ENCODE measurements at regions of chr2 and their contacts with region 1.

Region 1: GRCh38 chr2:68251187-68251854 is 1.0 kb downstream of the PPP3R1 start:
- DNase-seq: peak; percentile 66 to 89 (median 76)
- H3K4me3 ChIP-seq: peak overlapping the region; percentile 44 to 96 (median 86)
- H3K27ac ChIP-seq: peak overlapping the region; percentile 85 to 100 (median 96)
- H3K4me1 ChIP-seq: peaks cover 26 to 55% of the 10 kb centered on the region in 2 donors
- H3K27me3 ChIP-seq: no peaks in the 10 kb centered on the region
- CTCF ChIP-seq: peak; percentile 60 to 88 (median 76)
- POLR2A ChIP-seq: peak; percentile 20 to 65

Region 2: GRCh38 chr2:68044099-68044498 is 207.2 kb before region 1 on chr2:
- intact Hi-C with region 1: no loop called
- DNase-seq: no peak
- H3K4me3 ChIP-seq: no peak overlapping the region
- H3K27ac ChIP-seq: peak overlapping the region in 2 of 5 donors; percentile 9 to 18
- H3K4me1 ChIP-seq: peaks cover 6 to 22% of the 10 kb centered on the region in 2 donors
- H3K27me3 ChIP-seq: no peaks in the 10 kb centered on the region
- CTCF ChIP-seq: no peak
- POLR2A ChIP-seq: no peak

Region 3: GRCh38 chr2:68110102-68110501 is 141.2 kb before region 1 on chr2:
- intact Hi-C with region 1: no loop called
- DNase-seq: no peak
- H3K4me3 ChIP-seq: no peak overlapping the region
- H3K27ac ChIP-seq: no peak overlapping the region
- H3K4me1 ChIP-seq: no peaks in the 10 kb centered on the region
- H3K27me3 ChIP-seq: no peaks in the 10 kb centered on the region
- CTCF ChIP-seq: no peak
- POLR2A ChIP-seq: no peak

Region 4: GRCh38 chr2:68157402-68158133 is 93.8 kb before region 1 on chr2 and contains the start of gene PNO1:
- intact Hi-C with region 1: loop called in 1 of 2 experiments (anchors 5 kb)
- DNase-seq: peak; percentile 95 to 98 (median 97)
- H3K4me3 ChIP-seq: peak within 1 kb of the TSS; percentile 44 to 92 (median 54)
- H3K27ac ChIP-seq: peak within 1 kb of the TSS; percentile 72 to 99 (median 95)
- H3K4me1 ChIP-seq: peaks cover 10 to 23% of the 10 kb centered on the region in 2 donors
- H3K27me3 ChIP-seq: no peaks in the 10 kb centered on the region
- CTCF ChIP-seq: peak in 2 of 6 experiments; percentile 17 to 18
- POLR2A ChIP-seq: peak in 1 of 2 donors; percentile 81
- total RNA-seq, gene PNO1: 6.3 to 23.2 (median 15.1) TPM

Region 5: DNA sequence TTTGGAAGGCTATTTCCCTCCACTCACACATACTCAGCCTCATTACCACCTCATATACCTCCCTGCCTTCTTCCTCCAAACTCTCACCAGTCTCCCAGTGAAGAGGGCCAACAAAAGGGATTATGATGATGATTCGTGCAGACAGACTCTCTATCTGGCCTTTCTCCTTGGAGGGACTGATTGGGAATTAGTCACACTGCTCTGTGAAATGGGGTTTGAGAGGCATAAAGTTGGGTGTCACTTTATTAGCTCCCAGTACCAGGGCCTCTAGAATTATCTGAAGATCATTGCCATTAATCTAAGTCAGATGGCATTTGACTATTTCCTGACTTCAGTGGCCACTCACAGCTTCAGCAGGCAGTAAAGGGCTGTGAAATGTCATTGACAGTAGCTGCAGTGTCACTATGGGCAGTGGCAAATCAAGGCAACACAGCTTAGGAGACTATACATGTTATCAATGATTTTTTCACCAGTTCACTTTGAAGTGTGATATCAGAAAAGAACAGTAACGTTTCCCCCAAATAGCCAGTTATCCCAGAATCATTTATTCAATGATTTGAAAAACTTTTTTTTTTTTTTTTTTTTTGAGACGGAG is 51.1 kb after region 1 on chr2:
- intact Hi-C with region 1: no loop called
- DNase-seq: no peak
- H3K4me3 ChIP-seq: no peak overlapping the region
- H3K27ac ChIP-seq: no peak overlapping the region
- H3K4me1 ChIP-seq: no peaks in the 10 kb centered on the region
- H3K27me3 ChIP-seq: no peaks in the 10 kb centered on the region
- CTCF ChIP-seq: no peak
- POLR2A ChIP-seq: no peak

Region 6: GRCh38 chr2:68565858-68566257 is 314.5 kb after region 1 on chr2:
- intact Hi-C with region 1: no loop called
- DNase-seq: no peak
- H3K4me3 ChIP-seq: no peak overlapping the region
- H3K27ac ChIP-seq: no peak overlapping the region
- H3K4me1 ChIP-seq: no peaks in the 10 kb centered on the region
- H3K27me3 ChIP-seq: no peaks in the 10 kb centered on the region
- CTCF ChIP-seq: no peak
- POLR2A ChIP-seq: no peak